Transverse colon (tissue), 4 donors: ENCODE measurements at regions of chr1 and their contacts with region 1.

Region 1: GRCh38 chr1:87292684-87293493 is 35.8 kb upstream of the LMO4 start:
- DNase-seq: peak; percentile 59
- H3K4me3 ChIP-seq: no peak overlapping the region
- H3K27ac ChIP-seq: no peak overlapping the region
- H3K4me1 ChIP-seq: no peaks in the 10 kb centered on the region
- H3K27me3 ChIP-seq: no peaks in the 10 kb centered on the region
- CTCF ChIP-seq: peak; percentile 69 to 85 (median 77)
- EP300 ChIP-seq: no peak
- POLR2A ChIP-seq: no peak

Region 2: DNA sequence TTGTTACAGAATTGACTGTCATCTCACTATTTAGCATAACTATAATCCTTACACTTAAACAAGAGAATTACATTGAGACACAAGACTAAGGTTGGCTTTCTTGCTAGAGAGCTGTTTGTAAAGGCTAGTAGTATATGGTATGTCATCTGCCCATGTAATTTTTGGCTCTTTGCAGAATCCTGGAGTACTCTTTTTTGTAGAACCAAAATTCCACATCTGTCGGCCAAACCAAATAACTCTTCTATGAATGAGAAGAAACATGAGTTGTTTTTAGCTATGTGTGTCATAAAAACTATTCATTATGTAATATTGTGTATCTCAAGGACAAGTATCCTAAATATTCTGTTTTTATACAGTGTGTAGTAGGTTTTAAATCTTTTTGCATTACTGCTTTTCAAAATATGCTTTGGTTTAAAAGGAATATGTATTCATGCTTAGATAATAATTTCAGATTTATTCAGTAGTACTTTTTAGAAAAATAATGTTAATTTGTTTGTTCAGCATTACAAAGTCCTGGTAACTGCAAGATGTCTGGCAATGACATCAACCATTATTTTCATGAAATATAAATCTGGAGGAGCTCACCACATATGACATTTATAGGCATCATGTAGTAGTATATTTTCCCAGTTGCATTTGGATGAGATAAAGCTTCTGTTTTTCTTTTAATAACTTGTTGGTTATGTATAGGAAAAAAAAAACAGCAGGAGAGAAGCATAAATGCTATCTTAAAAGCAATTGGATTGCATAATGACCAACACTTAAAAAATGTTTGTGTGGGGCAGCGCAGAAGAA is 218.7 kb before region 1 on chr1:
- in situ Hi-C with region 1: no loop called
- intact Hi-C with region 1: no loop called
- DNase-seq: no peak
- H3K4me3 ChIP-seq: no peak overlapping the region
- H3K27ac ChIP-seq: no peak overlapping the region
- H3K4me1 ChIP-seq: no peaks in the 10 kb centered on the region
- H3K27me3 ChIP-seq: no peaks in the 10 kb centered on the region
- CTCF ChIP-seq: no peak
- EP300 ChIP-seq: no peak
- POLR2A ChIP-seq: no peak

Region 3: GRCh38 chr1:88052167-88052566 is 759.3 kb after region 1 on chr1:
- in situ Hi-C with region 1: loop called in 1 of 4 experiments (anchors 25 kb)
- intact Hi-C with region 1: loop called (anchors 10 kb)
- DNase-seq: no peak
- H3K4me3 ChIP-seq: no peak overlapping the region
- H3K27ac ChIP-seq: no peak overlapping the region
- H3K4me1 ChIP-seq: no peaks in the 10 kb centered on the region
- H3K27me3 ChIP-seq: no peaks in the 10 kb centered on the region
- CTCF ChIP-seq: no peak
- EP300 ChIP-seq: no peak
- POLR2A ChIP-seq: no peak

Region 4: GRCh38 chr1:88061492-88062177 is 768.7 kb after region 1 on chr1:
- in situ Hi-C with region 1: loop called in 1 of 4 experiments (anchors 25 kb)
- intact Hi-C with region 1: loop called (anchors 10 kb)
- DNase-seq: peak; percentile 58
- H3K4me3 ChIP-seq: no peak overlapping the region
- H3K27ac ChIP-seq: no peak overlapping the region
- H3K4me1 ChIP-seq: no peaks in the 10 kb centered on the region
- H3K27me3 ChIP-seq: no peaks in the 10 kb centered on the region
- CTCF ChIP-seq: peak; percentile 63 to 89 (median 73)
- EP300 ChIP-seq: no peak
- POLR2A ChIP-seq: no peak